Left colon (tissue), 2 donors: ENCODE measurements at regions of chr5 and their contacts with region 1.

Region 1: GRCh38 chr5:139422307-139422893 is 16.9 kb downstream of the DNAJC18 start:
- DNase-seq: no peak
- ATAC-seq: peak; percentile 40

Region 2: GRCh38 chr5:139513852-139514485 is 91.6 kb after region 1 on chr5:
- intact Hi-C with region 1: loop called in 1 of 2 experiments (anchors 5 kb)
- DNase-seq: no peak
- ATAC-seq: no peak